Left cardiac atrium (tissue), 4 donors: ENCODE measurements at regions of chr2 and their contacts with region 1.

Region 1: DNA sequence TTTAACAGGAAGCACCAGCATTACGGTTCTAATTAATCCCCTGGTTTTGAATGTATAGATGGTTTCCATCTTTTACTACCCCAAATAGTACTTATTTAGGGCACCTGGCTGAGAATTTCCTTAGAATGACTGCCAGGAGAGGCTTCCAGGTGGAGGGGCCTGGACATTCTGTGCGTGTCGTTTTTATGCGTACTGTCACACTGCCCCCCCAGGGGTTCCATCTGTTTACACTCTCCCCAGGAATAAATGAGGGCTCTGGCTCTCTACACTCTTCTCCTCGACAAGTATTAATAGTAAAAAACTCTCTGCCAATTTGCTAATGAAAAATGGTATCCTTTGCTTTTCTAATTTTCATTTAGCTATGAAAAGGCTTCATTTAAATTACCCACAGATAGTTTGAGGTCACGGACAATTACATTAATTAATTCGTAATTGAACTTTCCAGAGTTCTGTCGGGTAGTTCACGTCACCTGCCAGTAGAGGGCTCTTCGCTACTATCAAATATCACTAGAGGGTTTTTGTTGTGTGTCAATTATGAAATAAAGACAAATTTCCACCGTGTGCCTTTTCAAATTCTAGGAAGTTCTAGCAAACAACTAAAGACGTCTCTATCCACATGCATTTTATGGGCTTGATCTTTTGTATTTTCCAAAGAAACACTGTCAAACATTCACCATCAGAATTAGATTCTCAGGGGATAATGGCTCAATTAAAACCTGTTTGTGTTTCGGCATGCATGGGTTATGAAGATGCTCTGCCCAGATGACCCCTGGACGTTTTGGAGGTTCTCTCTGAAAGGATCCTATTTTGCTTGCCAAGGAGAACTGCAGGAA is 88.8 kb upstream of the ASB18 start:
- DNase-seq: no peak
- ATAC-seq: no peak

Region 2: GRCh38 chr2:237026981-237027711 is 674.2 kb after region 1 on chr2:
- intact Hi-C with region 1: loop called (anchors 2 to 5 kb)
- DNase-seq: peak; percentile 80
- ATAC-seq: peak; percentile 70 to 87